ENCODE measurements at regions of chr12 and their contacts with region 1.

Region 1: GRCh38 chr12:69254046-69254445 is 14.7 kb downstream of the CPSF6 start:
- DNase-seq: no peak
- H3K4me3 ChIP-seq: no peak overlapping the region
- H3K27ac ChIP-seq: no peak overlapping the region
- H3K4me1 ChIP-seq: no peaks in the 10 kb centered on the region
- H3K27me3 ChIP-seq: no peaks in the 10 kb centered on the region
- CTCF ChIP-seq: peak in 1 of 3 donors; percentile 18
- EP300 ChIP-seq: no peak
- POLR2A ChIP-seq: no peak

Region 2: DNA sequence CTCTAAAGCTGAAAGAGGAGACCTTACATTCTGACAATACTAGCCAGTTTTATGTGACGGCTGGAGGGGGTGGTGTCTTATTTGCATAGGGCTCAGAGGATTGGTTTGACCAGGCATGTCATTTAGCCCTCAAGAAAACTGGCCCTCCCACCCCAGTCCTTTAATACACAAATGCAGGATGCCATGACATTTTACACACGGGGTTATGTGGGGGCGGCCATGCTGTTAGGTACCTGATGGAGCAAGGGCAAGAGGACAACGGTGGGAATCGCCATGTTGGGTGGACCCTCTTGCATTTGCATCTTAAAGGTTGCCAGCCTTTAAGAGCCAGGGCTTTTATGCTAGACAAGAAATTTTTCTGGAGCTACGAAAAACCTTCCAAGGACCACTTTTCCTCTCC is 422.8 kb before region 1 on chr12:
- intact Hi-C with region 1: loop called in 1 of 4 experiments (anchors 10 kb)
- DNase-seq: no peak
- H3K4me3 ChIP-seq: no peak overlapping the region
- H3K27ac ChIP-seq: no peak overlapping the region
- H3K4me1 ChIP-seq: no peaks in the 10 kb centered on the region
- H3K27me3 ChIP-seq: no peaks in the 10 kb centered on the region
- CTCF ChIP-seq: no peak
- EP300 ChIP-seq: no peak
- POLR2A ChIP-seq: no peak

Region 3: GRCh38 chr12:68977909-68978610 is 276.0 kb before region 1 on chr12:
- intact Hi-C with region 1: no loop called
- DNase-seq: no peak
- H3K4me3 ChIP-seq: no peak overlapping the region
- H3K27ac ChIP-seq: no peak overlapping the region
- H3K4me1 ChIP-seq: peaks cover 2% of the 10 kb centered on the region
- H3K27me3 ChIP-seq: no peaks in the 10 kb centered on the region
- CTCF ChIP-seq: no peak
- EP300 ChIP-seq: no peak
- POLR2A ChIP-seq: no peak

Region 4: GRCh38 chr12:69238589-69239351 is 15.3 kb before region 1 on chr12:
- intact Hi-C with region 1: loop called in 1 of 4 experiments (anchors 1 kb)
- DNase-seq: no peak
- H3K4me3 ChIP-seq: peak overlapping the region; percentile 87
- H3K27ac ChIP-seq: peak overlapping the region; percentile 40 to 94
- H3K4me1 ChIP-seq: peaks cover 9% of the 10 kb centered on the region
- H3K27me3 ChIP-seq: no peaks in the 10 kb centered on the region
- CTCF ChIP-seq: no peak
- EP300 ChIP-seq: no peak
- POLR2A ChIP-seq: no peak

Region 5: DNA sequence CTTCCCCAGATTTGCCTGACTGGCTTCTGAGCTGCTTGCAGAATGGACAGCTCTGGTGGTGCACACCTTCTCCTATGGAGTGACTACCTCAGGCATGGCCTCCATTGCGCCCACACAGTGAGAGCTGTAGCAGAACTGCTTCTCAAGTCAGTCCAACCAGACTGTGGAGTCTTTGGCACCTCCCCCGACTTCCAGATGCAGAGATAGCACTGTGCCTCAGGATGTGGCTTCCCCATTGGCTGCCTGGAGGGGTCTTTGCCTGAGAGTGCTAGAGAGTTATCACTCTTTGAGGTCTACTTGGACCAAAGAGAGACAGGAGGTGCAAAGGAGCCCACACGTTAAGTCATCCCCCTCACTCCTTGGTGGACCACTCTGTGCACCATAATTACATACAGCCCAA is 171.4 kb after region 1 on chr12:
- intact Hi-C with region 1: no loop called
- DNase-seq: no peak
- H3K4me3 ChIP-seq: no peak overlapping the region
- H3K27ac ChIP-seq: no peak overlapping the region
- H3K4me1 ChIP-seq: no peaks in the 10 kb centered on the region
- H3K27me3 ChIP-seq: no peaks in the 10 kb centered on the region
- CTCF ChIP-seq: no peak
- EP300 ChIP-seq: no peak
- POLR2A ChIP-seq: no peak